Dendritic cell treated with granulocyte-macrophage colony-stimulating factor and Interleukin-4, amounts not matched to agents 40 ng/mL and 50 ng/mL, for 4 days (primary cell): ENCODE measurements at regions of chr5 and their contacts with region 1.

Region 1: GRCh38 chr5:58891096-58891970 is 308.5 kb downstream of the RAB3C start:
- H3K4me3 Mint-ChIP-seq: no peak overlapping the region
- H3K27ac Mint-ChIP-seq: no peak overlapping the region
- H3K4me1 Mint-ChIP-seq: peaks cover 13% of the 10 kb centered on the region
- H3K27me3 Mint-ChIP-seq: peaks cover 10% of the 10 kb centered on the region

Region 2: GRCh38 chr5:58871648-58872242 is 19.6 kb before region 1 on chr5:
- intact Hi-C with region 1: no loop called
- H3K4me3 Mint-ChIP-seq: no peak overlapping the region
- H3K27ac Mint-ChIP-seq: no peak overlapping the region
- H3K4me1 Mint-ChIP-seq: no peaks in the 10 kb centered on the region
- H3K27me3 Mint-ChIP-seq: peaks cover 7% of the 10 kb centered on the region

Region 3: DNA sequence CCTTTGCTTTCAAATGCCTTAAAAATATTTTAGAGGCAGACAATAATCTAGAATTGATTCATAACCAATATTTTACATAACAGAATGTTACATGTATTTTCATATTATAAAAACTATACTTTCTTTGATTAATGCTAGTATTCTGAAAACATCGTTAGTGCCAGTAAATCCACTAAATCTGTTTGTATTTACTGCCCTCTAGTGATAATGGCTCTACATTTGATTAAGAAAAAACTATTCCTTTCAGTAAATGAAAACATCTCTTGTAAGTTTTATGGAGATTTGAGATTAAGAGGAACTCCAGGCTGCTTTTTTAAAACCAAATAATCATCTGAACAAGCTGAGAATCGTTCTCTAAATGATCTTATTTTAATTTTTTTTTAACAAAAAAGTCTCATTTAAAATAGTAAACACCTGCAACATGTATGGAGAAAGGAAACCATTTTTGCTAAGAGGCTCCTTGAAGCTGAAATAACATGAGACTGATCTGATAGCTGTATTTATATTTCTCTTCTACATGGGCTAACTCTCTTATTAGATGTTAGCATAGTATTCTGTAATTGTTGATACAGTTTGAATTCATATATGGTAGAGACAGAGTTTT is 116.2 kb after region 1 on chr5:
- intact Hi-C with region 1: loop called (anchors 1 kb)
- H3K4me3 Mint-ChIP-seq: no peak overlapping the region
- H3K27ac Mint-ChIP-seq: no peak overlapping the region
- H3K4me1 Mint-ChIP-seq: no peaks in the 10 kb centered on the region
- H3K27me3 Mint-ChIP-seq: no peaks in the 10 kb centered on the region

Region 4: GRCh38 chr5:59174248-59174844 is 283.0 kb after region 1 on chr5:
- intact Hi-C with region 1: loop called (anchors 10 kb)
- H3K4me3 Mint-ChIP-seq: no peak overlapping the region
- H3K27ac Mint-ChIP-seq: no peak overlapping the region
- H3K4me1 Mint-ChIP-seq: peaks cover 9% of the 10 kb centered on the region
- H3K27me3 Mint-ChIP-seq: no peaks in the 10 kb centered on the region

Region 5: GRCh38 chr5:59380350-59380951 is 489.1 kb after region 1 on chr5:
- intact Hi-C with region 1: loop called (anchors 5 kb)
- H3K4me3 Mint-ChIP-seq: no peak overlapping the region
- H3K27ac Mint-ChIP-seq: no peak overlapping the region
- H3K4me1 Mint-ChIP-seq: no peaks in the 10 kb centered on the region
- H3K27me3 Mint-ChIP-seq: no peaks in the 10 kb centered on the region

Region 6: GRCh38 chr5:59483971-59484472 is 592.7 kb after region 1 on chr5:
- intact Hi-C with region 1: no loop called
- H3K4me3 Mint-ChIP-seq: no peak overlapping the region
- H3K27ac Mint-ChIP-seq: no peak overlapping the region
- H3K4me1 Mint-ChIP-seq: no peaks in the 10 kb centered on the region
- H3K27me3 Mint-ChIP-seq: no peaks in the 10 kb centered on the region